Posterior vena cava (tissue), 2 donors: ENCODE measurements at regions of chr4 and their contacts with region 1.

Region 1: DNA sequence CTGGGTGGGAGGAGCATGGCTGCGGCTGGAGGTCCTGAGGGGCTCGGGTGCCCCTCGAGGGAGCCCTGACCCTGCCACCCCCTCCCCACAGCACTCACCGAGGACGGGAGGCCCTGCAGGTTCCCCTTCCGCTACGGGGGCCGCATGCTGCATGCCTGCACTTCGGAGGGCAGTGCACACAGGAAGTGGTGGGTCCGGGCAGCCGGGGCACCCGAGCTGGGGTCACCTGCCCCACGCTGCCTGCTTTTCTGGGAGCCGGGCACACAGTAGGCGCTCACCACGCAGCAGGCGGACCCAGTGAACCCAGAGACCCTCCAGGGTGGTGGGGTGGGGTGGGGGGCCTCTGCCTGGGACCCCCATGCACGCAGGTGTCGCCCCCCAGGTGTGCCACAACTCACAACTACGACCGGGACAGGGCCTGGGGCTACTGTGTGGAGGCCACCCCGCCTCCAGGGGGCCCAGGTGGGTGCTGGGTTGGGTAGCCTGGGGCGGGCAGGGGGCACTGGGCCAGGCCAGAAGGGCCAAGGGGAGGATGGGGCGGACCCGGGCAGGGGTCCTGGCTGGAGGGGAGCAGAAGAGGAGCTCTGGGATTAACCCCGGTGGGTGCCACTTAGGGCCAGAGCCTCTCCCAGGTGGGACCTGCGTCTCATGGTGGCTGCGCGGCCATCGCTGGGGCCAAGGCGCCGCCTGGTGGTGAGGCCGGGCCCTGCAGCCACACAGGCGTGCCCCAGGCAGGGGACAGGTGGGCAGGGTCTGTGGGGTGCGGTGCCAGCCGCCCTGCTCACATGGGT is 1.4 kb downstream of the HGFAC start:
- DNase-seq: no peak

Region 2: DNA sequence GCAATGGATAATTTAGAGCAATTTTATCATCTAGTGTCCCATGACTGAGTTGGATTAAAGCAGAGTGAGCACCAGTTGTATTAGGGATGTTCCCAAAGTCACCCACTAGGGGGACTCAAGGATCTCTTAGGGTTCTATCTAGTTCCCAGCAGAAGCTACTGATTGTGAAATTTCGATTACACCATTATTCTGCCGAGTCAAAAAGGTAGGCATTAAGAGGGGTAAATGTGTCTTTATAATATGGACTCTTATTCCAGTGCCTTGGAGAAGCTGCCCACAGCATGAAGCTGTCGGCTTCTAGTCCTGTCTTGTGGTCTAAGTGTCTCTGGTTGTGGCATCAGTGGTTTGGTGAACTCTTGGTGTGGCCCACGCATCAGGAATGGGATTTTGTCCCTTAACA is 97.0 kb before region 1 on chr4:
- intact Hi-C with region 1: loop called (anchors 1 to 2 kb)
- DNase-seq: no peak

Region 3: DNA sequence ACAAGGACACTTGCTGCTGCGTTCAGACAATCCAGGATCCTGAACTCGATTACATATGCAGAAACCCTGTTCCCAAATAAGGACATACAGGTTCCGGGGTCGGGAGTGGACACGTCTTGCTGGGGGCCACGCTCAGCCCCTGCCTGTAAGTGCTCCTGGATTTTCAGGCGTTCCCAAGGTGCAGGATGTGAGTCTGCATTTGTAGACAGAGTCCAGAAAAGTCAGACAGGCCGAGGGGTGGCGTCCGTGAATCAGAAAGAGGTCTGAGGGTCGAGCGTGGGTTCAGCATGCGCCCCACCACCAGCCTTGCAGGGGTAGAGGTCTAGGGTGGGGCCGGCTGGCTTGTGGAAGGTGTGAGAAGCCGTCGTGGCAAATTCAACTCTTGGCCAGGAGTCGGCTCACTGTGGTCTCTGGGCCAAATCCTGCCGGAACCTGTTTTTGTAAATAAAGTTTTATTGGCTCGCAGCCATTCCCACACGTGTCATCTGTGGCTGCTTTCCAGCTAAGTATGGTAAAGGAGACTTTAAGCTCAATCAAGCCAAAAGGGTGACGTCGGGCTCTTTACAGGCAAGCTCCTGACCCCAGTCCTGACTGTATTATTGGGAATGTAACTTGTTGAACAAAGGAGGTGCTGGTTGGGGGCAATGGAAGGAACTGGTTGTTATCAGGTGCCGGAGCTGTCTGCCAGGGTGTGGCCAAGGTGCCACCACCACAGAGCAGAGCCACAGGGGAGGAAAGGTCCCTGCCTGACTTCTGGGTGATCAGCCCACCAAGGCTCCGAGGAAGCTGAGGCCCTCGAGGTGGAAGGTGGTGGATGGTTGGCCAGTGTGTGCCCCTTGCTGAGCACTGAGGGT is 27.3 kb after region 1 on chr4:
- intact Hi-C with region 1: no loop called
- DNase-seq: no peak

Region 4: DNA sequence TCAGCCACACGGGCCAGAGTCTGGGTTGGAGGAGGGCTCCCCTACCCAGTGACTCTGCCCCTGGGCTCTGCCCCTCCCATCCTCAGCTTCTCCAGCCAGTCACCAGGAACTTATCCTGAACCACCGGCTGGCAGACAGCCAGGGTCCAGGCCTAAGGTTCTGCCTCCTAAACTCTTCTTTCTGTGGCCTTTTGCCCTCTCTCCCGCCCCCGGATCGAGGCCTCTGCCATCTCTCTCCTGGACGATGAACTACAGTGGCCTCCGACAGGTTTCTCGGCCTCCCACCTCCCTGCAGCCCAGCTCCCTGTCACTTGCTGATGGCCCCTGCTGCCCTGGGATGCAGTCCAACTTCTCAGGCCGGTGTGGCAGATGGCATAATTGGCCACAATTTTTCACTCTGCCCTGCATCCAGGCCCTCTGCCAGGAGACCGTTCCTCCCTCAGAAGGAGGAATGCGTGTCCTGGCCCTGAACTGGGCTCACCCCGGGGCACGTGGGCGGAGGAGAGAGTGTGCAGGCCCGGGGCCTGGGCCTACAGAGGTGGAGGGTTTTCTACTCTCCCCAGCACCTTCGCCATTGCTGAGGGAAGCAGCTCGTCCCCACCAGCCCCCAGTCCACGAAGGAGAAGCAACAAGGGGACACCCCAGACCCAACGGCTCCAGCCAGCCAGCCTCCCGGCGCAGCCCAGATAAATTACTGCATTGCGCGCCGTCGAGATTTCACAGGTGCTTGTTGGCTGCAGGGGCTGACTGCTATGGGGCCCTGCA is 171.0 kb after region 1 on chr4:
- intact Hi-C with region 1: no loop called
- DNase-seq: peak; percentile 72

Region 5: GRCh38 chr4:3724319-3725231 is 281.4 kb after region 1 on chr4:
- intact Hi-C with region 1: no loop called
- DNase-seq: no peak